ENCODE measurements at regions of chr5 and their contacts with region 1.

Region 1: DNA sequence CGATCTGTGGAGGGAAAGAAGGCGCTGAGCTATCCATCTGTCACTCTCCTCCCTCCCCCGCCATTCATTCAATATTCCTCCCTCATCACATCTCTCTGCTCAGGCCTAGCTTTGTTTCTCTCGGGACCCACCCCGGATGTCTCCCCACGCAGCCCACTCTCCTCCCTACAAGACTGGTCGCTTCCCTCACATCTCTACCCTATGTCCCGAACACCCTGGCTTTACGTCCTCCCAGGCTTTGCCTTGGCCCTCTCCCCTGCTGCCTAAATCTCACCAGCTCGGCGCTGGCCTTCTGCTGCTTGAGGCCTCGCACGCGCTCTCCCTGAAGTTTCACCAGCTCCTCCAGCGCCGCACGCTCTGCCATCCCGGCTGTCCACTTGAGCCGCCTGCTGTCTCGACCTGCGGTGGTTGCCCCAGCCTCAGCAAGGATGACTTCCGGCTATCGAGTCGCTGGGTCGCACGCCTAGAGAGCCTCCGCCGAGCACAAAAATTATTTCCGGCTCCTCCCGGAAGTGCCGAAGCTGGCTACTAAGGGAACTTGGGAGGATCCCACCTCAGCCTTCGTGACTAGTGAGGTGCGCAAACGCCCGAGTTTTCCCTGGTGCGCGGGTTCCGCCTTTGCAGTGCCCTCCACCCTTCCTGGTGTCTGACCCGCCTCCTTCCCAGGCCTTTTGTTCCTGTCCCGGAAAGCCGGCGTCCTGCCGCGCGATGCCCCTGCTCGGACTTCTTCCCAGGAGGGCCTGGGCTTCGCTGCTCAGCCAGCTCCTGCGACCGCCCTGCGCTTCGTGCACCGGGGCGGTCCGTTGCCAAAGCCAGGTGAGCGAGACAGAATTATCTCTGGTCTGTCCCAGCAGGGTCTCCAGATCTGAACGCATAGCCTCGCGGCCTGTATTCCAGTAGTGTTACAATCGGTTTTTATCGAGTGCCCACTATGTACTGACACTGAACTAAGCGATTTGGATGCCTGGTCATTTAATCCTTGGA is at the starts of genes HARS1 and HARS2:
- DNase-seq: peak; percentile 93
- H3K4me3 Mint-ChIP-seq: peak within 1 kb of the TSS; percentile 93
- H3K27ac Mint-ChIP-seq: peak within 1 kb of the TSS; percentile 73
- H3K4me1 Mint-ChIP-seq: no peaks in the 10 kb centered on the region
- H3K27me3 Mint-ChIP-seq: no peaks in the 10 kb centered on the region
- CTCF ChIP-seq: no peak
- total RNA-seq, gene HARS1: 75.8 and 79.9 TPM in 2 replicates
- total RNA-seq, gene HARS2: 45.1 TPM in 2 replicates

Region 2: GRCh38 chr5:140261403-140262171 is 429.6 kb before region 1 on chr5:
- CTCF ChIA-PET with region 1: no interaction called
- intact Hi-C with region 1: no loop called
- DNase-seq: peak; percentile 88
- H3K4me3 Mint-ChIP-seq: peak overlapping the region; percentile 46
- H3K27ac Mint-ChIP-seq: peak overlapping the region; percentile 95
- H3K4me1 Mint-ChIP-seq: peaks cover 36% of the 10 kb centered on the region
- H3K27me3 Mint-ChIP-seq: no peaks in the 10 kb centered on the region
- CTCF ChIP-seq: no peak

Region 3: GRCh38 chr5:140664359-140665119 is 26.7 kb before region 1 on chr5 and contains the start of gene WDR55:
- CTCF ChIA-PET with region 1: no interaction called
- intact Hi-C with region 1: loop called (anchors 1 kb)
- DNase-seq: peak; percentile 98
- H3K4me3 Mint-ChIP-seq: peak within 1 kb of the TSS; percentile 100
- H3K27ac Mint-ChIP-seq: peak within 1 kb of the TSS; percentile 91
- H3K4me1 Mint-ChIP-seq: peaks cover 23% of the 10 kb centered on the region
- H3K27me3 Mint-ChIP-seq: no peaks in the 10 kb centered on the region
- CTCF ChIP-seq: no peak
- total RNA-seq, gene WDR55: 54.2 and 59.8 TPM in 2 replicates

Region 4: GRCh38 chr5:140785905-140786686 is 94.9 kb after region 1 on chr5 and contains the start of gene PCDHA1:
- CTCF ChIA-PET with region 1: no interaction called
- intact Hi-C with region 1: no loop called
- DNase-seq: peak; percentile 23
- H3K4me3 Mint-ChIP-seq: peak within 1 kb of the TSS; percentile 56
- H3K27ac Mint-ChIP-seq: no peak within 1 kb of the TSS
- H3K4me1 Mint-ChIP-seq: no peaks in the 10 kb centered on the region
- H3K27me3 Mint-ChIP-seq: no peaks in the 10 kb centered on the region
- CTCF ChIP-seq: no peak
- total RNA-seq, gene PCDHA1: 0.73 and 0.83 TPM in 2 replicates

Region 5: GRCh38 chr5:140962190-140962589 is 271.0 kb after region 1 on chr5:
- CTCF ChIA-PET with region 1: no interaction called
- intact Hi-C with region 1: no loop called
- DNase-seq: no peak
- H3K4me3 Mint-ChIP-seq: no peak overlapping the region
- H3K27ac Mint-ChIP-seq: no peak overlapping the region
- H3K4me1 Mint-ChIP-seq: peaks cover 10% of the 10 kb centered on the region
- H3K27me3 Mint-ChIP-seq: no peaks in the 10 kb centered on the region
- CTCF ChIP-seq: no peak